GM12878 (cell line): ENCODE measurements at regions of chr5 and their contacts with region 1.

Region 1: DNA sequence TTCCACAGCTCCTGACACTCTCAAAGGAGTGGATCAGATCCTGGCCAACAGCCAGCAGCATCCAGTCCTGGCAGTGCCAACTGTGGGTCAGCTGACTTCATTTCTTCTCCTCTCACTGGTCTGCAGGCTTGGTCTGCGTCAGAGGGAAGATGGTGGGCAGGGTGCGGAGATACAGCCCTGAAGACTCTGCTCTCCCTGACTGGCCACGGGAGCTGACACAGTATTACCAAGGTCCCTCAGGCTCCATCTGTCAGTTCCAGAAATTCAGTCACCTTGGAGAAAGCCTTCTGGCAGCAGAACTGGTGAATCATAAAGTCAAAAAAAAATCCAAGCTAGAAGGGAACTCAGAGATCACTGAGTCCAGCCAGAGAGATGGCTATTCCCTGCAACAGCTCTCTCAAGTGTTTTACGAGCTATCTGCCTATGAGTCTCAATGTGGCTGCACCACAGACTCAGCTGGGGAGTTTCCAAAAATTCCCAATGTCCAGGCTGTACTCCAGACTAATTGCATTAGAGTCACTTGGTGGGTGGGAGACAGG is 28.0 kb downstream of the C1QTNF2 start:
- DNase-seq: no peak
- ATAC-seq: no peak
- H3K4me3 ChIP-seq: no peak overlapping the region
- H3K27ac ChIP-seq: no peak overlapping the region
- H3K4me1 ChIP-seq: no peaks in the 10 kb centered on the region
- H3K27me3 ChIP-seq: no peaks in the 10 kb centered on the region
- CTCF ChIP-seq: no peak
- EP300 ChIP-seq: no peak
- POLR2A ChIP-seq: no peak
- RAD21 ChIP-seq: no peak

Region 2: GRCh38 chr5:160071516-160071915 is 271.0 kb before region 1 on chr5:
- CTCF ChIA-PET with region 1: interaction called, 7 read pairs
- POLR2A ChIA-PET with region 1: no interaction called
- RAD21 ChIA-PET with region 1: interaction called, 3 read pairs
- SMC1A ChIA-PET with region 1: no interaction called
- in situ Hi-C with region 1: loop called (anchors 10 kb)
- intact Hi-C with region 1: no loop called
- DNase-seq: no peak
- ATAC-seq: no peak
- H3K4me3 ChIP-seq: no peak overlapping the region
- H3K27ac ChIP-seq: no peak overlapping the region
- H3K4me1 ChIP-seq: no peaks in the 10 kb centered on the region
- H3K27me3 ChIP-seq: no peaks in the 10 kb centered on the region
- CTCF ChIP-seq: no peak
- EP300 ChIP-seq: no peak
- POLR2A ChIP-seq: no peak
- RAD21 ChIP-seq: no peak

Region 3: DNA sequence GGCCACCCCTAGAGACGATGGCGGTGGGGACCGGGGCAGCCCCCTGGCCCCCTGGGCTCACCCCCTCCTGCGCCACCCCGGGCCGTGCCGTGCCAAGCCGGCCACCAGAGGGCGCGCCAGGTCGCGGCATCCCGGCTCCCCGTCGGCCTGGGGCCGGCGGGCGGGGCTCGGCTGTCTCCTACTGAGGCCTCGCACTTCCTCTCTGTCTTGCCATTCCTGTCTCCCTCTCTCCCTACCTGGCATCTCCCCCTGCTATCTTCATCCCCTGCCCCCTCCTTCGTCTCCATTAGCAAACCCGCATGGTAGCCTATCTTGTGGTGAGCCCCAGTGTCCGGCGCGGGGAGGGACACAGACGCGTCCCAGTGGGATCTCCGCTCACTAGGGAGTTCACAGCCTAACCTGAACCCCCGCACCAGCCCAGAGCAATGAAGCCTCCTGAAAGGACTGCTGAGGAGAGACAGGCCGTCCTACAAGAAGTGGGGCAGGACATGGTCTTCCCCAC is 143.0 kb before region 1 on chr5:
- CTCF ChIA-PET with region 1: interaction called, 133 read pairs
- POLR2A ChIA-PET with region 1: interaction called, 8 read pairs
- RAD21 ChIA-PET with region 1: interaction called, 66 read pairs
- SMC1A ChIA-PET with region 1: interaction called, 67 read pairs
- in situ Hi-C with region 1: loop called (anchors 5 kb)
- intact Hi-C with region 1: loop called (anchors 1 kb)
- DNase-seq: no peak
- ATAC-seq: peak; percentile 99
- H3K4me3 ChIP-seq: peak overlapping the region; percentile 45; the same call in 1 of the 2 replicates
- H3K27ac ChIP-seq: no peak overlapping the region
- H3K4me1 ChIP-seq: peaks cover 8% of the 10 kb centered on the region; the same call in 1 of the 2 replicates
- H3K27me3 ChIP-seq: no peaks in the 10 kb centered on the region
- CTCF ChIP-seq: peak; percentile 74 to 85 (median 83); a peak in 5 of 6 replicates
- EP300 ChIP-seq: no peak
- POLR2A ChIP-seq: no peak
- RAD21 ChIP-seq: peak; percentile 90

Region 4: DNA sequence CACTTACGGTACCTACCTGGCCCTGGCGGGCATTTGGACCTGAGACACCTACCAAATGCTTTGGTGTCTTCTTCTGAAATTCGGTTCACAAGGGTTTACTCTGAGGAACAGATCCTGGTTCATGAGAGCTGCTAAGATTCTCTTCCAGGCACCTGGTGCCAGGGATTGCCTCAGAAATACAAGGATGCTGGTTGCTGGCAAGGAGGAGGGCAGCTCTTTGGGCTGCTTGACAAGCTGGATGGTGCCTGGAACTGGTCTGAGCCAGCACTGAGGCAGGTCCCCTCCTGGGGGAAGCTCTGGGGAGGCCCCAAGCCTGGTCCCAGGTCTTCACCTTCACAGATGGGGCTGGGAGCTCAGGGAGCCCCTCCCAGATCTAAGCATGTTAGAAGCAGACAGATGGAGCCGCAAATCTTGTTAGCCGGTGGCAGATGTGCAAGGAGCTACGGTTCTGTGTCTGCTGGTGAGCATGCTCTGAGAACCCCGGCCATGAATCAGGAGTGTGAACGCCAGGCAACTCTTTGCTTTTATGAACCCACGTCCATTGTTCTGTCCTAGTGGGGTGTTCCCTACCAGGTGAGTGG is 96.9 kb before region 1 on chr5:
- CTCF ChIA-PET with region 1: interaction called, 37 read pairs
- POLR2A ChIA-PET with region 1: no interaction called
- RAD21 ChIA-PET with region 1: interaction called, 6 read pairs
- SMC1A ChIA-PET with region 1: interaction called, 21 read pairs
- in situ Hi-C with region 1: no loop called
- intact Hi-C with region 1: loop called (anchors 2 kb)
- DNase-seq: no peak
- ATAC-seq: no peak
- H3K4me3 ChIP-seq: no peak overlapping the region
- H3K27ac ChIP-seq: no peak overlapping the region
- H3K4me1 ChIP-seq: peaks cover 5% of the 10 kb centered on the region
- H3K27me3 ChIP-seq: no peaks in the 10 kb centered on the region
- CTCF ChIP-seq: no peak
- EP300 ChIP-seq: no peak
- POLR2A ChIP-seq: no peak
- RAD21 ChIP-seq: no peak

Region 5: DNA sequence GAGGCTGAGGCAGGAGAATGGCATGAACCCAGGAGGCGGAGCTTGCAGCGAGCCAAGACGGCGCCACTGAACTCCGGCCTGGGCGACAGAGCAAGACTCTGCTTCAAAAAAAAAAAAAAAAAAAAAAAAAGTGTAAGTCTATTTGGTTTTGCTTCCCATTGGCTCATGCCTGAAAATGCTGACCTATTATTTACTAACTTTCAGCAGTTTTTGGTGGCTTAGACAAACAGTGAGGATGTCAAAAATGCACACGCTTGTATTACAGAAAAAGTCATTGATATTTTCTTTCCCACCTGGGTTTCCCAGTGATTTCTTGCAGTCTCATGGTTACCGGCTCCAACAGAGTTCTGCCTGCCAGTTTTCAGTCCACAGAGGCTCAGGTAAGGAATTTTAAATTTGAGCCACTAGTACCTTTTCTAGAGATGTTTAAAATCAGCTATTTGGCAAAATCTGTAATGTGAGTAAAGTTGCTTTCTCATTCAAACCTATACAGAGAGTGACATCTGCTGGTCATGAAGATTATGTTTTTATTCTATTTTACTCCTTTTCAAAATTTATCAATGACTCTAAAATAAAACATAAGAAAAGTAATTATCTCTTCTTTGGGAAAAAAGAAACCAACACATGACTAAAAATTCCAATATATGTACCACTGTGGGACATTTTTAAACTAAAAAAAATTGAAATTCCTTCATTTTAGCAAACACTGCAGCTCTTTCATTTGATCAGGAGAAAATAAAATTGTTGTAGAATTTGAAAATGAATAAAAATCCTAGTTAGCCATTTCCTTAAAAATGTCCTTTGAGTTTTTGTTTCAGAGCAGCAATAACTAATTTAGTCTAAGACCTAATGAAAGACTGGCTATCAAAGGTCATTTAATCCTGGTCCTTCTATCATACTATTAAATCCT is 48.6 kb after region 1 on chr5:
- CTCF ChIA-PET with region 1: interaction called, 18 read pairs
- POLR2A ChIA-PET with region 1: no interaction called
- RAD21 ChIA-PET with region 1: interaction called, 3 read pairs
- SMC1A ChIA-PET with region 1: interaction called, 11 read pairs
- in situ Hi-C with region 1: no loop called
- intact Hi-C with region 1: no loop called
- DNase-seq: no peak
- ATAC-seq: peak; percentile 69
- H3K4me3 ChIP-seq: no peak overlapping the region
- H3K27ac ChIP-seq: no peak overlapping the region
- H3K4me1 ChIP-seq: no peaks in the 10 kb centered on the region
- H3K27me3 ChIP-seq: no peaks in the 10 kb centered on the region
- CTCF ChIP-seq: peak; percentile 22 to 62 (median 30); a peak in 4 of 6 replicates
- EP300 ChIP-seq: no peak
- POLR2A ChIP-seq: no peak
- RAD21 ChIP-seq: peak; percentile 37; the same call in 1 of the 2 replicates